ENCODE measurements at regions of chr4 and their contacts with region 1.

Region 1: DNA sequence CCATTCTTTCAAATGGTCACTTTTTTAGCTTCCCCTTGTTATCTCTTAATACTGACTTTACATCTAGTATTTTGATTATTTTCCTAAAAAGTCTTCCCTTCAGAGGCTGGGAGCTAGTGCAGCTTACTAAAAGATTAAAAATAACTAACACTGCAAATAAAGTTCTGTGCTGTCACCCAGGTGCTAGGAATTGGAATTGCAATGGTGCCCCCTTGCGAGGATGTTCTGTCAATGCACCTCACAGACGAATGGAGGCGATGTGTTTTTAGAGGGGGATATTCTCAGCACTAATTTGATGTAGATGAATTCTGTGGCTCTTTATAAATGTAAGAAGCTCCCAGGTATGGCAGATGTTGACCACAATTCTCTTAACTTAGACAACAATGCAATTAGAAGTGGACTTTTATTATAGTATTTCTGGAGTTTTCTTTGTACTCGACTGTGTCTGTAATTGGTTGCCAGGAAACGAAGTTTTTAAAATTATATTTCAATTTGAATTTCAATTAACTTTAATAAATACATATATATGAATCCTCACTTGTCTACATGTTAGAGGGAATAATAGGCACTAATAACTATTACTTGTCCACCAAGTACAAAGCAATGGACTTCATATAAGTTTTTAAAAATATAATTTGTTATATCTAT is 22.0 kb upstream of the SMIM31 start:
- DNase-seq: no peak
- ATAC-seq: peak; percentile 78

Region 2: DNA sequence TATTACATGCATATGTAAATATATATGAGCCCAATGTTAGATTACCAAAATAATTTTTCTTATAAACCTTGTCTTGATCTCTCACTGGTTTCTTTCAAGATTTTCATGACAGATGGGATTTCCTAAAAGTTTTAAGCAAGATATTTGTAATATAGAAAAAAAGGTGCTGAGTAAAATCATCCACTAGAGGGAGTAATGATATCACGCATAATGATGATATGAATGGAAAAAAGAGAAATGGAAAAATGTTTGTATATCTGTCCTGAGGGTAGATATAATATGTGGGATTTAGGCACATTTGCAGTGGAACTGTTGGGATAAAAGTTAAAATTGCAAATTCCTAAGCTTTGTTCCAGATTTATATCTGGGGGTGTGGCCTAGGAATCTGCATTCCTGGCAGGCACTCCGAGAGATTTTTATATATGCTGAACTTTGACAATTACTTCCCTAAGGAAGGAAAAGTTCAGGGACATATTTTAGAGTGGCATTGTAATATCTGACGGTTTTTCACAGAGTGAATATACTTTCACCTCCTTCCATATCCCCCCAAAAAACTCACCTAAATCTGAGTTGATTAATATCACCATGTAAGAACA is 1177.0 kb before region 1 on chr4:
- intact Hi-C with region 1: loop called (anchors 5 kb)
- DNase-seq: no peak
- ATAC-seq: no peak